ENCODE measurements at regions of chr17 and their contacts with region 1.

Region 1: DNA sequence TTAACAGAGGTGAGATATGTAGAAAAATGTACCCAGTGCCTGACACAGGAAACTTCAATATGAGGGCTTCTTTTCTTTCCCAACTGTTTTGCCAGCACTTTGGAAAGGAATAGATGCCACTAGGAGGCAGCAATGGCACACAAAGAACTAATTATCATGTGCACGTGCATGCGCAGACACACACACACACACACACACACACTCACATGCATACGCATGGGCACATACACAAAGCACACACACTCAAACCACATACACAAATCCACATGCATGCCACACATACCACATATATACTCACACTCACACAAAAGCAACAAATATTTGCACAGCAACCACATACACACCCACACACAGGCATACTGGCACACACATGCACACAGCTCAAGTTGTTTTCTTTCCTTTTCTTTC is 8.8 kb upstream of the CEP112 start:
- DNase-seq: peak; percentile 59
- H3K4me3 Mint-ChIP-seq: no peak overlapping the region
- H3K27ac Mint-ChIP-seq: no peak overlapping the region
- H3K4me1 Mint-ChIP-seq: peaks cover 16% of the 10 kb centered on the region
- H3K27me3 Mint-ChIP-seq: no peaks in the 10 kb centered on the region

Region 2: DNA sequence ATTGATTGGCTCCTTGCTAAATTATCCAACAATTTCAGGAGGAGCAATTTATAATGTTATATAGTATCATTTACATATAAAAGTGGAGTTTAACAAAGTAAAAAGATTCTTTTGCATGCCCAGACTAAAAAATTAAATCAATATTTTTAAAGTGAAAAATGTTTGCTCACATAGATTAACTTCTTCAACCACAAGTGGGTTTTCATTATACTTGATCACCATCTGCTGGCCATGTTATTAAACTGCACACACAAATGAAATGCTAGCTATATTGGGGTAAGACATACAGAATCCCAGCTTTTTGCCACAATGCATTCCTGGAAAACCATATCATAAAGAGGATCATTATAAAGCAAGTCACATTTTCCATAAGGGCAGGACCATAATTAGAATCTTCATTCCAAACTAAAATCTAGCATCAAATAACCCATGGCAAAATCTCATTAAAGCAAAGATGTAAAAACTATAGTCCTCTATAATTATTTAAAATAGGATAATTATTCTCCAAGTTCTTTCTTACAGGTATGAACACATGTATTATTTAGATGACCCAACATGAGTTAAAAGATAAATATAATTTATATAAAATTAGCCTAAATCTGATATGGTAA is 35.1 kb before region 1 on chr17:
- CTCF ChIA-PET with region 1: no interaction called
- POLR2A ChIA-PET with region 1: no interaction called
- intact Hi-C with region 1: no loop called
- DNase-seq: no peak
- H3K4me3 Mint-ChIP-seq: no peak overlapping the region
- H3K27ac Mint-ChIP-seq: no peak overlapping the region
- H3K4me1 Mint-ChIP-seq: peaks cover 12% of the 10 kb centered on the region
- H3K27me3 Mint-ChIP-seq: no peaks in the 10 kb centered on the region

Region 3: GRCh38 chr17:66255112-66255511 is 54.4 kb after region 1 on chr17:
- CTCF ChIA-PET with region 1: interaction called, 3 read pairs
- POLR2A ChIA-PET with region 1: no interaction called
- intact Hi-C with region 1: loop called (anchors 5 kb)
- DNase-seq: peak; percentile 28
- H3K4me3 Mint-ChIP-seq: peak overlapping the region; percentile 11
- H3K27ac Mint-ChIP-seq: peak overlapping the region; percentile 24
- H3K4me1 Mint-ChIP-seq: peaks cover 13% of the 10 kb centered on the region
- H3K27me3 Mint-ChIP-seq: no peaks in the 10 kb centered on the region

Region 4: DNA sequence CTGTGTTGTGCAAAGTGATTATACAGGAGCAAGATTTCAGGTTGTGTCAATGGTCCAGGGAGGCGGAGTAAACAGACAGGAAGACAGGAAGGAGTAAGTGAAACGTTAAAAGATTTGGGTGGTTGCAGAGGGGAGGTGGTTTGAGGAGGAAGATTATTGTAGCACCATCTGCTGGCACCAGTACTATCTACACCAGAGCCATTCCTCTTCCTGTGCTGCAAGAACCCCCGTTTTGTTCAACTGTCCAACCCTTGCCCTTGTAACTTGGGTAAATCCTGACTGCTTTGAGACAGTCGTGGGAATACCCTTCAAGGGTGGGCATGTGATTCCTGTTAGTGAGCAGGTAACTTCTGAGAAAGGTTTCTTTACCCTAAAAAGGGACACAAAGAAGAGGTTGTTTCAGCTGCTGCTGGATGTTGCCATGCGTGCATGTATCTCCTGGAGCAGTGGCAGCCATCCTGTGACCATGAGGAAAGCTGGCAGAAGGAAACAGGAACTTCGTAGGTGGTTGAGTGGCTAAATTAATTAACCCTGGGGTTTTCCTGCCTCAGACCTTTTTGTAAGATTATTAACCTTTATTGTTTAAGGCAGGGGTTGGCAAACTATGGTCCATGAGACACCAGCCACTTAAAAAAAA is 225.8 kb after region 1 on chr17:
- CTCF ChIA-PET with region 1: interaction called, 3 read pairs
- POLR2A ChIA-PET with region 1: interaction called, 3 read pairs
- intact Hi-C with region 1: loop called (anchors 5 kb)
- DNase-seq: peak; percentile 58
- H3K4me3 Mint-ChIP-seq: peak overlapping the region; percentile 14
- H3K27ac Mint-ChIP-seq: peak overlapping the region; percentile 64
- H3K4me1 Mint-ChIP-seq: peaks cover 75% of the 10 kb centered on the region
- H3K27me3 Mint-ChIP-seq: no peaks in the 10 kb centered on the region

Region 5: DNA sequence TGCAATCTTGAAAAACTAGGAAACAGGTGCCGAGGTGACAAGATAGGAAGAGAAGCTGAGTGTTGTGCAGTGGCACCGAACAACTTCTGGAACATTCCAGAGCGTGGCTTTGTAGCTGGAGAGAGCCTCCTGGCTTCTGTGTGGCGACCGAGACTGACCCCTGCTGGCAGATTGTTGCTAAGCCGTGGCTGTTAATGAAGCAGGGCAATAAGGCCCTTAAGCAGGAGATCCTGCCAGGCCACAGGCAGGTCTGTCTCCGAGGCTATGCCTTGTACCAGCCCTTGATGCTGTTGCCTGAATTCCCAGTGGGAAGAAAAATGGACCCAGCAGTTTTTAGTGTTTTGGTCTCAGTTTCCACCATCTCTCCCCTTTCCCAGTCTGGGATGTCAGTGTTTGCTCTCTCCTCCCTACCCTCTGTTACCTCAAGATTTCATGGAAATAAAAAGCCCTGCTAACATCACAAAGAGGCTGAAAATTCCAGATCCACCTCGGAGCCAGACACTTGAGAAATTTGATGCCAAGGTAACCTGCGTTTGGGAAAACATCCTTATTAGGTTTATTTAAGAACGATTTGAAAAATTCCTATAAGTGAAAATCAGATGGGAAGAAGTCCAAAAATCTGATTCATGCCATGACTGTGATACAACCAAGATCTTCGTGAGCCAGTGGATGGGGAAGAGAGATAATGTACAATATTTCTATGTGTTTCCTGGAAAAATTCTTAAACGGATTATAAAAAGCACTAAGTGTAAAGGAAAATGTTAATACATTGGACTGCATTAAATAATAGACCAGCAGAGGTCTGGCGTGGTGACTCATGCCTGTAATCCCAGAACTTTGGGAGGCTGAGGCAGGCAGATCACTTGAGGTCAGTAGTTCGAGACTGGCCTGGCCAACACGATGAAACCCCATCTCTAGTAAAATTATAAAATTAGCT is 366.8 kb after region 1 on chr17:
- CTCF ChIA-PET with region 1: interaction called, 13 read pairs
- POLR2A ChIA-PET with region 1: no interaction called
- intact Hi-C with region 1: no loop called
- DNase-seq: peak; percentile 87
- H3K4me3 Mint-ChIP-seq: no peak overlapping the region
- H3K27ac Mint-ChIP-seq: no peak overlapping the region
- H3K4me1 Mint-ChIP-seq: peaks cover 40% of the 10 kb centered on the region
- H3K27me3 Mint-ChIP-seq: no peaks in the 10 kb centered on the region

Region 6: GRCh38 chr17:66906321-66907278 is 705.9 kb after region 1 on chr17:
- CTCF ChIA-PET with region 1: interaction called, 11 read pairs
- POLR2A ChIA-PET with region 1: no interaction called
- intact Hi-C with region 1: loop called (anchors 1 kb)
- DNase-seq: peak; percentile 79
- H3K4me3 Mint-ChIP-seq: no peak overlapping the region
- H3K27ac Mint-ChIP-seq: no peak overlapping the region
- H3K4me1 Mint-ChIP-seq: peaks cover 4% of the 10 kb centered on the region
- H3K27me3 Mint-ChIP-seq: peaks cover 2% of the 10 kb centered on the region

Measured in activated CD4-positive, alpha-beta memory T cell treated with anti-CD3 and anti-CD28 coated beads for 36 hours (primary cell).